A673 (cell line): ENCODE measurements at regions of chr6 and their contacts with region 1.

Region 1: GRCh38 chr6:6704452-6705425 is 116.2 kb downstream of the LY86 start:
- DNase-seq: no peak
- H3K4me3 ChIP-seq: no peak overlapping the region
- H3K27ac ChIP-seq: no peak overlapping the region
- H3K4me1 ChIP-seq: peaks cover 12% of the 10 kb centered on the region
- H3K27me3 ChIP-seq: no peaks in the 10 kb centered on the region
- CTCF ChIP-seq: no peak

Region 2: DNA sequence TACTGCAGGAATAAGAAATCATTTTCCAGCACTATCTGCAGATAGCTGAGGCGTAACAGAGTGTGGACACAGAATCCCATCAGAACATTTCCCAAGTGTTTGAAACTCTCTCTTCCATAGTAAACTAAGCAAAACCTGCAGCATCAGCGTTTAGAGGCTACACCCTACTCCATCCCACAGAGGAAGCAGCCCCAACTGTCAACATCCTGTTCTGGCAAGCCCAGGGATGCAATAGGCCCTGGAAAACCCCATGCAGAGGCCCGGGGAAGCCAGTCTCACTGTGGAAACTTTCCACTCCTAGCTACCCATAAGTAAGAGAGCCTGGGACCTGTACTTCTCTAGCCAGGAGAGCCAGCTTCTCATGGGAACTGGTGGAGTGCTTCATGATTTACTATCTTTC is 13.2 kb after region 1 on chr6:
- CTCF ChIA-PET with region 1: no interaction called
- POLR2A ChIA-PET with region 1: interaction called, 17 read pairs
- intact Hi-C with region 1: no loop called
- DNase-seq: no peak
- H3K4me3 ChIP-seq: no peak overlapping the region
- H3K27ac ChIP-seq: no peak overlapping the region
- H3K4me1 ChIP-seq: peaks cover 14% of the 10 kb centered on the region
- H3K27me3 ChIP-seq: no peaks in the 10 kb centered on the region
- CTCF ChIP-seq: no peak

Region 3: GRCh38 chr6:7107578-7108195 is 402.9 kb after region 1 on chr6 and contains the start of gene RREB1:
- CTCF ChIA-PET with region 1: no interaction called
- POLR2A ChIA-PET with region 1: no interaction called
- intact Hi-C with region 1: no loop called
- DNase-seq: peak; percentile 80
- H3K4me3 ChIP-seq: peak within 1 kb of the TSS; percentile 78
- H3K27ac ChIP-seq: peak within 1 kb of the TSS; percentile 67
- H3K4me1 ChIP-seq: peaks cover 32% of the 10 kb centered on the region
- H3K27me3 ChIP-seq: no peaks in the 10 kb centered on the region
- CTCF ChIP-seq: no peak
- total RNA-seq, gene RREB1: 55.5 and 61.6 TPM in 2 replicates

Region 4: DNA sequence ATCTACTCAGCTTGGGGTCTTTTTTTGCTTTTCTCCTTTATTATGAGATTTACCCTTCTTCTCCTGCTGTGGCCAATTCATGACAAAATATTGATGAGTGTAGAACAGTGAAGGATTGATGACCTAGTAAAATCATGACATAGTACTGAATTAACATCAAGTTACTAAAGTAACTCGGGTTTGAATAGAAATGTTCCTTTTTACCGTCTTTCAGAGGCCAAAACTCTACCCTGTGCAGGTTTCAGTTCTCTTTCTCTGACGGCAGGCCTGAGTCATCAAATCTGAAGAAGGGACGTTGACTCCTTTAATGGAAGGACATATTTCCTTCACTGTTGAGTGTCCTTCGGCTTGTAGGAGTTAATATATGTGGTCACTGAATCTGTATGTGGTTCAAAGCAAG is 483.8 kb after region 1 on chr6:
- CTCF ChIA-PET with region 1: no interaction called
- POLR2A ChIA-PET with region 1: no interaction called
- intact Hi-C with region 1: no loop called
- DNase-seq: no peak
- H3K4me3 ChIP-seq: no peak overlapping the region
- H3K27ac ChIP-seq: no peak overlapping the region
- H3K4me1 ChIP-seq: no peaks in the 10 kb centered on the region
- H3K27me3 ChIP-seq: no peaks in the 10 kb centered on the region
- CTCF ChIP-seq: no peak